Prostate gland (tissue), 2 donors: ENCODE measurements at regions of chr5 and their contacts with region 1.

Region 1: GRCh38 chr5:54243473-54244080 is 66.8 kb downstream of the ARL15 start:
- DNase-seq: no peak
- H3K4me3 ChIP-seq: no peak overlapping the region
- H3K27ac ChIP-seq: no peak overlapping the region
- H3K4me1 ChIP-seq: no peaks in the 10 kb centered on the region
- H3K27me3 ChIP-seq: no peaks in the 10 kb centered on the region
- CTCF ChIP-seq: peak in 3 of 4 experiments; percentile 35 to 70 (median 69)
- POLR2A ChIP-seq: no peak

Region 2: DNA sequence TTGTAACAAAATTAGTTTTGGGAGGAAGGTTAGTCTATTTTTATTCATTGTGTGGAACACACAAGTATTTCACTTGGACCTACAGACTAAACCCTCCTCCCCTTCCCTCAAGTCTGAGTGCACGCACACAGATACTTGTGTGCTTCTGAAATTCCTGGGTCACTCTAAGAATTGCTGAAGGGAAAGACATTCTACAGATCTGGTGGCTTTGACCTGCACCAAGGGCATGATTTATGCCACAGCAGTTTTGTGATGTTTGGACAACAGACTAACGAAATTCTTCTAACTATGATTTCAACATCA is 83.7 kb before region 1 on chr5:
- intact Hi-C with region 1: no loop called
- DNase-seq: no peak
- H3K4me3 ChIP-seq: no peak overlapping the region
- H3K27ac ChIP-seq: no peak overlapping the region
- H3K4me1 ChIP-seq: no peaks in the 10 kb centered on the region
- H3K27me3 ChIP-seq: no peaks in the 10 kb centered on the region
- CTCF ChIP-seq: no peak
- POLR2A ChIP-seq: no peak

Region 3: GRCh38 chr5:54421976-54422375 is 178.4 kb after region 1 on chr5:
- intact Hi-C with region 1: loop called (anchors 5 kb)
- DNase-seq: no peak
- H3K4me3 ChIP-seq: no peak overlapping the region
- H3K27ac ChIP-seq: no peak overlapping the region
- H3K4me1 ChIP-seq: no peaks in the 10 kb centered on the region
- H3K27me3 ChIP-seq: no peaks in the 10 kb centered on the region
- CTCF ChIP-seq: no peak
- POLR2A ChIP-seq: no peak

Region 4: DNA sequence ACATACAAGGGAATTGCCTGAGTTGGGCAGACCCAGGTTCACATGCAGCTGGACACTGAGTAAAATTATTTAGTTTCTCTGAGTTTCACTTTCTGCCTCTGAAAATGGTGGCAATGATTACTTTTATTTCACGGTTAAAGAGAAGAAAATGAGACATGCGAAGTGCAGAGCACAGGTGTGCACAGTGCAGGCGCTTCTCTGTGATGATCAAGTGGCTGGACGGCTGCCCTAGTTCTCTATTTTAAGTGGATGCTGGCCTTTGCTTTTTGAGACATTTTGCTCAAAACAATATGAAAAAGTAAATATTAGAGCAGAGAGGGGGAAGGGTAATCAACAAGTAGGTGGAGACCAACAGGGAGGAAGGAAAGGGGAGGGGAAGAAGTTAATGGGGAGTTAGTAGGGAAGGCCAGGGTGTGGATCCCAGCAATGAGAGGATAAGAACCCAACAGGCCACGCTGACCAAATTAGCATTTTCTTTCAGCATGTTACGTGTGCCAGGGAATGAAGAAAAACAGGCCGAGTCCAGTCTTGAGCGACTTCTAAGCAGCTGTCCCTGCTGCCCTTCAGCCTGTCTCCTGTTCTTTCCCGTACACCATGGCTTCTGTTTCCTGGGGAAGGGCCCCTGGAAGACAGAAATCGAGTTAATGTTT is 290.1 kb after region 1 on chr5:
- intact Hi-C with region 1: no loop called
- DNase-seq: peak; percentile 47
- H3K4me3 ChIP-seq: no peak overlapping the region
- H3K27ac ChIP-seq: peak overlapping the region; percentile 49 to 65
- H3K4me1 ChIP-seq: peaks cover 15% of the 10 kb centered on the region
- H3K27me3 ChIP-seq: no peaks in the 10 kb centered on the region
- CTCF ChIP-seq: no peak
- POLR2A ChIP-seq: no peak

Region 5: GRCh38 chr5:54867310-54867944 is 623.9 kb after region 1 on chr5:
- intact Hi-C with region 1: loop called (anchors 10 kb)
- DNase-seq: no peak
- H3K4me3 ChIP-seq: no peak overlapping the region
- H3K27ac ChIP-seq: no peak overlapping the region
- H3K4me1 ChIP-seq: no peaks in the 10 kb centered on the region
- H3K27me3 ChIP-seq: no peaks in the 10 kb centered on the region
- CTCF ChIP-seq: peak; percentile 53 to 71 (median 68)
- POLR2A ChIP-seq: no peak